ENCODE measurements at regions of chr22 and their contacts with region 1.

Region 1: GRCh38 chr22:40679964-40680818 is 907 bp downstream of the MCHR1 start:
- DNase-seq: no peak
- H3K4me3 Mint-ChIP-seq: no peak overlapping the region
- H3K27ac Mint-ChIP-seq: peak overlapping the region; percentile 18
- H3K4me1 Mint-ChIP-seq: peaks cover 26% of the 10 kb centered on the region
- H3K27me3 Mint-ChIP-seq: peaks cover 9% of the 10 kb centered on the region

Region 2: DNA sequence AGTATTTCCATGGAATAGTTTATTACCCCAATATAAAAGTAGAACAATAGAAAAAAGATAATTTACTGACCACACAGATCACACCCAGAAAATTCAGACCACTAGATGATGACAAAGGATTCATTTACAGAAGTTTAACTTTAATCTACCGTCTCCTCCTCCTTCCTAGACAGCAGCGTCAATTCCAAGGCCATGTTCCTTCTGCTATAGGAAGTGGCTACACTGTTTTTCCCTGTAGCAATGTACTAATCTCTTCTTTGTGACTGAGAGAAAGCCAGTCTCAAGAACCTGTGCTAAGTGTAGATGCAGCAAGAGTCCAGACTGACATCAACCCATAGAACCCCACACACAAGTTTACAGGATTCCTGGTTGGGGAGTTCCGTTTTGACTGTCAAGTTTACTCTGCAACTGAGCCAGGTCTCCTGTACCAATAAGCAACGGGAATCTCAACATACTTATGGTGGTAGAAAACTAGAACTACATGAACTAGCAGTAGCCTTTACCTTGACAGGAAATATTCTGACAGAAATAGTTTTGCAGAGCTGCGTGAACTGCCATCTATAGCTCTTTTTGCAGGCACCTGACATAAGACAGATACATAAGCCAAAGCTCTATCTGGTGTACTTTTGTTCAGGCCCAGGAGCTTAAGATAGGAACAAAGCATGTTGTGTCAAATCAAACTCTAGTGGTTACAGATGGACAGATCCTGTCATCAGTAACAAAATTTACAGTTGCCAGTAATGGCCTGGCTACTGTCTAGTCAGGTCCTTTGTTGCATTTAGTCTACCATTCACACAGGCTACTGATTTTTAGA is 86.5 kb before region 1 on chr22:
- intact Hi-C with region 1: no loop called
- DNase-seq: no peak
- H3K4me3 Mint-ChIP-seq: no peak overlapping the region
- H3K27ac Mint-ChIP-seq: no peak overlapping the region
- H3K4me1 Mint-ChIP-seq: peaks cover 28% of the 10 kb centered on the region
- H3K27me3 Mint-ChIP-seq: no peaks in the 10 kb centered on the region

Region 3: GRCh38 chr22:40651563-40652501 is 28.4 kb before region 1 on chr22:
- intact Hi-C with region 1: loop called (anchors 1 kb)
- DNase-seq: peak; percentile 70
- H3K4me3 Mint-ChIP-seq: peak overlapping the region; percentile 65
- H3K27ac Mint-ChIP-seq: peak overlapping the region; percentile 87
- H3K4me1 Mint-ChIP-seq: peaks cover 16% of the 10 kb centered on the region
- H3K27me3 Mint-ChIP-seq: no peaks in the 10 kb centered on the region

Region 4: GRCh38 chr22:40714192-40714951 is 34.2 kb after region 1 on chr22:
- intact Hi-C with region 1: loop called (anchors 1 kb)
- DNase-seq: no peak
- H3K4me3 Mint-ChIP-seq: no peak overlapping the region
- H3K27ac Mint-ChIP-seq: no peak overlapping the region
- H3K4me1 Mint-ChIP-seq: peaks cover 27% of the 10 kb centered on the region
- H3K27me3 Mint-ChIP-seq: peaks cover 17% of the 10 kb centered on the region

Region 5: DNA sequence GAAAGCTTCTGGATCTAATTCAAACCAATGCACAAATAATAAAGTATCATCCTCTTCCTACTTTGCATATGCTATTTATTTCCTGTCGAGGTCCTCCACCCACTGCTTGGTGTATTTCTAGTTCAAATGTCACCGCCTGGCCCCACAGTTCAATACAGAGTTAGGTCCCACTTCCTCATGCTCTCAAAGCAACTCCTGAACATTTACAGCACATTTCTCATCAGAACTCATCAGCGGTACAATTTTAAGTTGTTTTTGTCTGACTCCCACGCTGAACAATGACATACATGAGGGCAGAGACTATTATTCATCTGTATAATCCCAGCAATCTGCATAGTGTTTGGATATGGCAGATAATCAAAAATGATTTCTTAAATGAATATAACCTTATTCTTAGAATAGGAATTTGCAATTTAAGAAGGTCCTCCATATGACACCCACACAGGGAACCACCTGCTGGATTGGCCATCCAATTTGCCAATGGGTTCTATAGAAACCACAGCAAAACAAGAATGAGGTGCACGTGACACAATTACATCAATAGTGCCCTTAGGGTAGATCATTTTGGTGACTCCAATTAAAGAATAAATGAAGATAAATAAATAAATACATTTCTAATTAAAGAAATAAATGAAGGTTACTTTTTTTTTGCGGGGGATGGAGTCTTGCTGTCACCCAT is 84.7 kb after region 1 on chr22:
- intact Hi-C with region 1: loop called (anchors 1 kb)
- DNase-seq: no peak
- H3K4me3 Mint-ChIP-seq: no peak overlapping the region
- H3K27ac Mint-ChIP-seq: peak overlapping the region; percentile 83
- H3K4me1 Mint-ChIP-seq: peaks cover 21% of the 10 kb centered on the region
- H3K27me3 Mint-ChIP-seq: no peaks in the 10 kb centered on the region

Region 6: DNA sequence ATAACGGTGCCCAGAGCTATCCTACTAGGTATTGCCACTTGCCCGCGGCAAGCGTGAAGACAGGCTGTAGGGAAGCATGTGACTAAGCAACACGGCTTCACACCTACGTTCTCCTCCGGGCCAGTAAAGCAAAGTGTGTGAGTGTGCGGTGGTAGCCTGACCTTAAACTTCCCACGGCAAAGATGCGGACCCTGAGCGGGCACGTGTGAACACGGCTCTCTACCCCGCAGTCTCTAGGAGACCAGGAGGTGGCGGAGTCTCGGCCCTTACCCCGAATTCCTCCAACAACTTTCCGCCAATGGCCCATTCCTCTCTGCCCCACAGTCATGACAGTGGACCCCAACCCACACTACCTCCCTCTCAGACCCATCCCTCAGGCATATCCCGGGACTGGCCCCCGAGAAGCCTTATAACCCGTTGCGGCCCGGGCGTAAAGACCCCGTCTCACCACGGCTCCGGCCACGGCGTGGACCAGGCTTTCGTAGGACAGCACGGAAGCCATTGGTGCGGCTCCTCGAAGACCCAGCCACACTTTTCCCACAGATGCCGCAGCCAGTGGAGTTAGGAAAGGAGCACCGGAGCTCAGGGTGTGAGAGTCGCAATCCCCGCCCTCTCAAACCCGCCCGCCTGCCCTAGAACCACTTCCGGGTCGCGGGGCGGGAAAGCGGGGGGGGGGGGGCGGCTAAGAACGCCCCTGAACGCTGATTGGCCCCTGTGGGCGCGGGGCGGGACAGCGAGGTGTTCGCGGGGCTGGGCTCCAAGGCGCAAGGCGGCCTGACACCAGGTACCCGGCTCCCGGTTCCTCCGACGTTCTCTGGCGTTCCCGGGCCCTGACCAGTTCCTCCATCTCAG is 138.8 kb after region 1 on chr22 and contains the start of gene SLC25A17:
- intact Hi-C with region 1: loop called (anchors 1 kb)
- DNase-seq: peak; percentile 80
- H3K4me3 Mint-ChIP-seq: peak within 1 kb of the TSS; percentile 82
- H3K27ac Mint-ChIP-seq: peak within 1 kb of the TSS; percentile 80
- H3K4me1 Mint-ChIP-seq: peaks cover 33% of the 10 kb centered on the region
- H3K27me3 Mint-ChIP-seq: no peaks in the 10 kb centered on the region
- total RNA-seq, gene SLC25A17: 27.3 and 33.0 TPM in 2 replicates

Region 7: GRCh38 chr22:40856513-40857308 is 176.5 kb after region 1 on chr22 and contains the starts of genes ST13 and XPNPEP3:
- intact Hi-C with region 1: loop called (anchors 1 kb)
- DNase-seq: peak; percentile 96
- H3K4me3 Mint-ChIP-seq: peak within 1 kb of the TSS; percentile 96
- H3K27ac Mint-ChIP-seq: peak within 1 kb of the TSS; percentile 100
- H3K4me1 Mint-ChIP-seq: peaks cover 38% of the 10 kb centered on the region
- H3K27me3 Mint-ChIP-seq: no peaks in the 10 kb centered on the region
- total RNA-seq, gene ST13: 194 and 201 TPM in 2 replicates
- total RNA-seq, gene XPNPEP3: 17.5 and 17.9 TPM in 2 replicates

Region 8: GRCh38 chr22:40898850-40899357 is 218.7 kb after region 1 on chr22:
- intact Hi-C with region 1: loop called (anchors 5 kb)
- DNase-seq: no peak
- H3K4me3 Mint-ChIP-seq: peak overlapping the region; percentile 11
- H3K27ac Mint-ChIP-seq: peak overlapping the region; percentile 70
- H3K4me1 Mint-ChIP-seq: peaks cover 20% of the 10 kb centered on the region
- H3K27me3 Mint-ChIP-seq: no peaks in the 10 kb centered on the region

Region 9: DNA sequence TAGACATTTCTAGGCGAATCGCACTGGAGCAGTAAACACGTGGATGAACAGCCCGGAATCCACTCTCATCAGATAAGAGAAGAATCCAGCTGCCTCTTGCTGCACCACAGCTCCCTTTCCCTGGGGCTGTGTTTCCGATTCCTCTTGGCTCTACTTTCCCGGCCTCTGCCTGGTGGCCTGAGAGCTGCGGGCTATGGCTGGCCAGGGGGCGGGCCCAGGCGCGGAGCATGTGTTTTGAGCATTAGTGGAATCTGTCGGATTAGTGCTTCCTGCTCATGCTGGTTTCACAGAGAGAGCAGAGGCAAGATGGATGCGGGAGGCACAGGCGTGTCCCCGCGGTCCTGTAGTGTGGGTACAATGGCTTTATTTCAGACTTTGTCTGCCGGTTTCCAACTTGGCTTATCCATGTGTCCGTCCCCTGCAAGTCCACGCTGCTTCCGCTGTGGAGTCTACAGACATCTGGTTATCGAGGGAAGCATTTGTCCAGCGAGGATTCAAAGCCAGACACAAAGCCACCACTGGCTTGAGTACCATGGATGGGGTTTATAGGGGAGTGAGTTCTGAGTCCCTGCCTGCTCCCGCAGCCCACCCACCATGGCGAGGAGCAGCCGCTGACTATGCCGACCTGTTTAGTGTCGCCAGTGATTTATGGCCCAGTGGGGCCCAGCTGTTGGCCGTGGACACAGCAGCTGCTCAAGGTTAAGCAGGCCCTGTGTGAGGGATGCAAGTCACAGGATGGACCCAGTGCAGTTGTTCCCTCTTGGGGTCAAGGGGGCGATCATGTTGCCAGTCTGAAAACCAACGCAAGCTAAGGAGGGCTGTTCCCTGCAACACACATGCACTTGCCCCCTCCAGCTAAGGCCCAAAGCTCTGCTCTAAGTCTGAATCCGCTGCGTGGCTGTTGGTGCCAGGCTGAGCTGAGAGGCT is 368.9 kb after region 1 on chr22:
- intact Hi-C with region 1: no loop called
- DNase-seq: no peak
- H3K4me3 Mint-ChIP-seq: no peak overlapping the region
- H3K27ac Mint-ChIP-seq: no peak overlapping the region
- H3K4me1 Mint-ChIP-seq: peaks cover 15% of the 10 kb centered on the region
- H3K27me3 Mint-ChIP-seq: no peaks in the 10 kb centered on the region

Measured in activated T-helper 2 cell treated with anti-CD3 and anti-CD28 coated beads, Interferon-gamma antibody, Interleukin-2, Interleukin-4, amounts not matched to agents 10 μg/mL and 5 μg/mL and 100 μg/mL, durations not matched to agents 14 hours and 24 hours and 36 hours (primary cell).